Esophagus muscularis mucosa (tissue), 4 donors: ENCODE measurements at regions of chr14 and their contacts with region 1.

Region 1: DNA sequence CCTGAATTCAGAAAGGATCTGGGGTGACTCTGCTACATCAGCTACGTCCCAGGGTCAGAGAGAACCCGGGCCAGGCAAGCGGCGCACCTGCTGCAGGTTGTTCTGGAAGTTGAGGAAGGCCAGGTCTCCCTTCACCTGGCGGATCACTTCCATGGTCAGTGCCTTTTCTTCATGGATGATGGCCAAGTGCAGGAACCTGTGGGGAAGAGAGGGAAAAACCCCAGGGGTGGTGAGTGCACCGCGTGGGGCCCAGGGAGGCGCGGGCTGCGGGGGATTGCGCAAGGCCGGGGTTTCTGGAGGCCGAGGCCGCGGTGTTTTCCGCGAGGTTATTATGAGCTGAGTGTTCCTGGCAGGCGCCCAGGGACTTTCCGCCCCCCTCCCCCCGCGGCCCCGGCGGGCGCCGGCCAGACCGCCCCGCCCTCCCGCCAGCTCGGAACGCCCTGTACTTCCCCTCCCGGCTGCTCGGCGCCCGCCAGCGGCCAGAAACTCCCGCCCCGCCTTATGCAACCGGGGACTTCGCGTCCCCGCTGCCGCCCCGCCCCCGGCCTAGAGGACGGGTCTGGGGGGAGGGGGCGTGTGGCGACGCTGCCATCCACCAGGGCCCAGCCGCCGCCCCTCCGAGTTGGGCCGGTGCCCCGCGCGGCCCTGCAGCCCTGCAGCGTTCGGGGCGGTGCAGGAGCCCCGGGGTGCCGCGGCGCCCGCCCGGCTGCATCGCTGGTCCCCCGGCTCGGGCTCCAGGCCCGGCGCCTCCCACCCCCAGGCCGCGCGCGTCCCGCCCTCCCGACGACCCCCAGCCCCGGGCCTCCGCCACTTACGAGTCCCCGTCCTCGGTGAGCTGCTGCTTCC is 723 bp downstream of the NFKBIA start:
- DNase-seq: peak; percentile 99
- H3K4me3 ChIP-seq: peak overlapping the region; percentile 86 to 97 (median 93)
- H3K27ac ChIP-seq: peak overlapping the region; percentile 99 to 100 (median 100)
- H3K4me1 ChIP-seq: peaks cover 46 to 53% (median 51%) of the 10 kb centered on the region in 4 donors
- H3K27me3 ChIP-seq: no peaks in the 10 kb centered on the region
- CTCF ChIP-seq: peak in 1 of 3 experiments; percentile 2
- EP300 ChIP-seq: peak; percentile 97
- POLR2A ChIP-seq: no peak

Region 2: GRCh38 chr14:35215110-35215876 is 188.5 kb before region 1 on chr14:
- intact Hi-C with region 1: loop called (anchors 2 kb)
- DNase-seq: no peak
- H3K4me3 ChIP-seq: no peak overlapping the region
- H3K27ac ChIP-seq: peak overlapping the region; percentile 45 to 50 (median 48)
- H3K4me1 ChIP-seq: peaks cover 0 to 26% (median 21%) of the 10 kb centered on the region in 4 donors
- H3K27me3 ChIP-seq: no peaks in the 10 kb centered on the region
- CTCF ChIP-seq: peak; percentile 60 to 75 (median 69)
- EP300 ChIP-seq: no peak
- POLR2A ChIP-seq: no peak

Region 3: DNA sequence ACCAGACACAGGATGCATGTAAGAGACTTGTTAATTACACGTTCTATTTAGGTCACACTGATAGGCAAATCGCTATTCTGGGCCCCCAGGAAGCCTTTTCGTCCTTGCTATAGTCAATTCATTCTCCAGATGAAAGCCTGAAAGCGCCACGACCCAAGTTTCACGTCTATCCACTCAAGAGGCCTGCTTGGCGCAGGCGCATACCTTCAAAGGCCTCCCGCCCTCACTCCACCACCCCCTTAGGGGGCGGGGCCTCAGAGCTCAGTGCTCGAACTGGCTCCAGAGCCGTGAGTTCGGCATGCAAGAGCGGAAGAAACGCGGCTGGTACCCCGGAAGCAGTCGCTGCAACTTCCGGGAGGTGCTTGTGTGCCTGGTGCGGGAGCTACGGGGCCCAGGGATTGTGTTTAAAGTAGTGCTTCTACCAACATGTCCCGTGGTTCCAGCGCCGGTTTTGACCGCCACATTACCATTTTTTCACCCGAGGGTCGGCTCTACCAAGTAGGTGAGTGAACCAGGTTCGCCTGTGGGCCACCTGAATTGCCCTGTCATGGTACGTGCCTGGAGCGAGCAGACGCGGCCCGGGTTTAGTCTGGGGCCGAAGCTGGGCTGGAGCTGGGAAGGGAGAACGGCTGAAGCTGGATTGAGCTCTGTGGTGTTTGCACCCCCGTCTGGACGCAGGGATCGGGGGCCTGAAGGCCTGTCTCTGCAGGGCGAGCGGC is 111.6 kb before region 1 on chr14 and contains the start of gene PSMA6:
- intact Hi-C with region 1: loop called (anchors 2 kb)
- DNase-seq: peak; percentile 100
- H3K4me3 ChIP-seq: peak within 1 kb of the TSS; percentile 72 to 91 (median 83)
- H3K27ac ChIP-seq: peak within 1 kb of the TSS; percentile 86 to 94 (median 90)
- H3K4me1 ChIP-seq: peaks cover 38 to 59% (median 51%) of the 10 kb centered on the region in 4 donors
- H3K27me3 ChIP-seq: no peaks in the 10 kb centered on the region
- CTCF ChIP-seq: peak in 1 of 3 experiments; percentile 7
- EP300 ChIP-seq: no peak
- POLR2A ChIP-seq: peak; percentile 61
- total RNA-seq, gene PSMA6: 70.5 to 143 (median 112) TPM

Region 4: GRCh38 chr14:35341446-35342159 is 62.2 kb before region 1 on chr14:
- intact Hi-C with region 1: loop called (anchors 2 kb)
- DNase-seq: peak; percentile 98
- H3K4me3 ChIP-seq: peak overlapping the region; percentile 44 to 50 (median 46)
- H3K27ac ChIP-seq: peak overlapping the region; percentile 92 to 96 (median 94)
- H3K4me1 ChIP-seq: peaks cover 59 to 80% (median 75%) of the 10 kb centered on the region in 4 donors
- H3K27me3 ChIP-seq: no peaks in the 10 kb centered on the region
- CTCF ChIP-seq: no peak
- EP300 ChIP-seq: peak; percentile 25
- POLR2A ChIP-seq: peak; percentile 31

Region 5: DNA sequence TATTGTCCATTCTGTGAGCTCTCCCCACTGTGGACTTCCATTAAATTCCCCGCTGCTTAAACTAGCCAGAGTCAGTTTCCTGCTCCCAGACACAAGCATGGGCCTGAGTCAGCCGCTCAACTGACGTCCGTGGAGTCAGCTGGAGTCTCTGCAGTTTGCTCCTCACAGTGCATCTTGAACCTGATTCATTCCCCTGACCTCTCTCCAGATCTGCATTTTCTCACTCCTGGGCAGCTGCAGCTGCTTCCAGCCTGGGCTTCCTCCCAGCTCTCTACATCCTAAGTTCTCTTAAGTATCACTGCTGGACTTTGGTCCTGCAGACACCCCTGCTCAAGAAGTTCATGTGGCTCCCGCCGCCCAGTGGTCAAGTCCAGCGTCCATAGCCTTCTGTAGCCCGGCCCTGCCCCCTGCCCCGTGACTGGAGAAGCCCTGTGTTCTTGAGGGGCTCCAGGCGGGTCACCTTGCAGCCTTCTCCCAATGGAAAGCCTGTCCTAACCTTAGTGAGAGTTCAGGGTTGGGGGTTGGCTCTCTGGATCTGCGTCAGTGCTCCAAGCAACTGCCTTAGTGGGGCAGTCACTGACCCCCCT is 19.3 kb before region 1 on chr14:
- intact Hi-C with region 1: loop called (anchors 2 kb)
- DNase-seq: no peak
- H3K4me3 ChIP-seq: peak overlapping the region in 2 of 4 donors; percentile 9 to 23
- H3K27ac ChIP-seq: peak overlapping the region; percentile 91 to 94 (median 92)
- H3K4me1 ChIP-seq: peaks cover 31 to 49% (median 46%) of the 10 kb centered on the region in 4 donors
- H3K27me3 ChIP-seq: no peaks in the 10 kb centered on the region
- CTCF ChIP-seq: peak in 2 of 3 experiments; percentile 35 to 37
- EP300 ChIP-seq: no peak
- POLR2A ChIP-seq: no peak